ENCODE measurements at regions of chr22 and their contacts with region 1.

Region 1: DNA sequence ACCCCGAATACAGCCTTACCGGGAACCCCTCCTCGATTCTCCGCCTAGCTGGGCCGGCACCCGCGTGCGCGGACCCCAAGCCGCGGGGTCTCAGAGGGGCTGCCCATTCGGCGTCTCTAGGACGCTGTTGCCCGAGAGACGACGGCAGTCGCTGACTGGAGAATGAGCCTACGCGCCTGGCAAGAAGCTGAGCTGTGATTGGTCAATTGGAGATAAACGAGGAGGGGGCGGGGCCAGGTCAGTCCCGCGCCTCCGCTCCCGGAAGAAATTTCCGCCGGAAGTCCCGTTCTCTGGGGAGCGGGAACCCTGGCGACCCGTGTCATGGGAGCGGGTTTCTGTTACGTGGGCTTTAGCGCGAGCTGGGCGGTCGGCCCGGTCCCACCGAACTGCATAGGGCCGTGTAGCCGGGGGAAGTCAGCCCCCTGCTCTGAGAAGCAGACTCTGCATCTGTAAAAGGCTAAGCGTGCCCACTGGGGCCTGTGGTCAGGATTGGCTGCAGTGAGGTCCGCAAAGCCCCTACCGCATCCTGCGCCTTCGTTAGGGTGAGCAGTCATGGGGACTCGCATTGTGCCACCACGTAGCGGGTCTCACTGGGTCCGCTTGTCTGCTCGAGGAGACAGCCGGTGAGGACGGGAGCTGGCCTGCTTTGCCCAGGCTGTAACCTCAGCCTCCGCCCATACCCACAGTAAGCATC is at the start of gene EFCAB6:
- DNase-seq: peak; percentile 74 to 88 (median 86)
- ATAC-seq: peak; percentile 97
- H3K4me3 ChIP-seq: peak within 1 kb of the TSS; percentile 93
- H3K4me3 Mint-ChIP-seq: peak within 1 kb of the TSS; percentile 82 to 98 (median 94)
- H3K27ac ChIP-seq: peak within 1 kb of the TSS; percentile 82
- H3K27ac Mint-ChIP-seq: peak within 1 kb of the TSS; percentile 87 to 95 (median 92)
- H3K4me1 ChIP-seq: peaks cover 7 to 10% of the 10 kb centered on the region in 2 donors
- H3K4me1 Mint-ChIP-seq: peaks cover 19 to 35% (median 31%) of the 10 kb centered on the region in 7 donors
- H3K27me3 ChIP-seq: no peaks in the 10 kb centered on the region
- H3K27me3 Mint-ChIP-seq: peaks cover 0 to 2% (median 0%) of the 10 kb centered on the region in 5 donors
- total RNA-seq, gene EFCAB6: 0.16 to 1.4 (median 0.90) TPM in 4 of 5 experiments, not detected in the other

Region 2: GRCh38 chr22:43923631-43924464 is 111.6 kb after region 1 on chr22 and contains the start of gene PNPLA3:
- CTCF ChIA-PET with region 1: no interaction called
- POLR2A ChIA-PET with region 1: no interaction called
- intact Hi-C with region 1: loop called (anchors 1 to 10 kb)
- DNase-seq: peak; percentile 48 to 84 (median 59)
- ATAC-seq: peak; percentile 96
- H3K4me3 ChIP-seq: peak within 1 kb of the TSS; percentile 57
- H3K4me3 Mint-ChIP-seq: peak within 1 kb of the TSS; percentile 80 to 95 (median 88)
- H3K27ac ChIP-seq: no peak within 1 kb of the TSS
- H3K27ac Mint-ChIP-seq: peak within 1 kb of the TSS in 8 of 9 donors; percentile 12 to 89 (median 42)
- H3K4me1 ChIP-seq: peaks cover 0 to 3% of the 10 kb centered on the region in 2 donors
- H3K4me1 Mint-ChIP-seq: peaks cover 4 to 6% (median 5%) of the 10 kb centered on the region in 7 donors
- H3K27me3 ChIP-seq: no peaks in the 10 kb centered on the region
- H3K27me3 Mint-ChIP-seq: peaks cover 4 to 37% (median 16%) of the 10 kb centered on the region in 5 donors
- total RNA-seq, gene PNPLA3: 0.19 to 0.29 TPM in 2 of 5 experiments, not detected in the others

Region 3: DNA sequence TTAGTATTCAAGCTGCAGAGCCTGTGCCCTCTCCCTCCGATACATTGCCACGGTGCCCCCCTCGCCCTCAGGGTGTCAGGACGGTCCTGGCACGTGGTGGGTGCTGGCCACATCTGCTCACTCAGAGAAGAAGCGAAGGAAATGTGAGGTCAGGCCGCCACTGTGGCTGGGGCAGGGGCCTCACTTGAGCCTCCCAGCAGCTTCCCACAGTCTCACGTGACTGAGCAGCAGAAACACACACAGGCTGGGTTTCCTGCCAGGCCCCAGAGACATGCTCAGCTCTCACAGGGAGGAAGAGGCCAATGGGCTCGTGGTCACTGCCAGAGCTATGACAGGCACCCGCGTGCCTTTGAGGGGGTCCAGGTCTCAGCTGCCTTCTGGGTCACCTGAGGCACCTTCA is 851.9 kb after region 1 on chr22:
- CTCF ChIA-PET with region 1: no interaction called
- POLR2A ChIA-PET with region 1: no interaction called
- intact Hi-C with region 1: loop called in 1 of 2 experiments (anchors 10 kb)
- DNase-seq: peak in 6 of 9 donors; percentile 27 to 49 (median 34)
- ATAC-seq: peak; percentile 58
- H3K4me3 ChIP-seq: peak overlapping the region; percentile 30
- H3K4me3 Mint-ChIP-seq: peak overlapping the region; percentile 33 to 77 (median 56)
- H3K27ac ChIP-seq: peak overlapping the region; percentile 61
- H3K27ac Mint-ChIP-seq: peak overlapping the region; percentile 68 to 91 (median 83)
- H3K4me1 ChIP-seq: peaks cover 43 to 46% of the 10 kb centered on the region in 2 donors
- H3K4me1 Mint-ChIP-seq: peaks cover 37 to 56% (median 47%) of the 10 kb centered on the region in 7 donors
- H3K27me3 ChIP-seq: no peaks in the 10 kb centered on the region
- H3K27me3 Mint-ChIP-seq: peaks cover 0 to 9% (median 0%) of the 10 kb centered on the region in 5 donors

Measured in naive thymus-derived CD4-positive, alpha-beta T cell (primary cell).